ENCODE measurements at regions of chr4 and their contacts with region 1.

Region 1: DNA sequence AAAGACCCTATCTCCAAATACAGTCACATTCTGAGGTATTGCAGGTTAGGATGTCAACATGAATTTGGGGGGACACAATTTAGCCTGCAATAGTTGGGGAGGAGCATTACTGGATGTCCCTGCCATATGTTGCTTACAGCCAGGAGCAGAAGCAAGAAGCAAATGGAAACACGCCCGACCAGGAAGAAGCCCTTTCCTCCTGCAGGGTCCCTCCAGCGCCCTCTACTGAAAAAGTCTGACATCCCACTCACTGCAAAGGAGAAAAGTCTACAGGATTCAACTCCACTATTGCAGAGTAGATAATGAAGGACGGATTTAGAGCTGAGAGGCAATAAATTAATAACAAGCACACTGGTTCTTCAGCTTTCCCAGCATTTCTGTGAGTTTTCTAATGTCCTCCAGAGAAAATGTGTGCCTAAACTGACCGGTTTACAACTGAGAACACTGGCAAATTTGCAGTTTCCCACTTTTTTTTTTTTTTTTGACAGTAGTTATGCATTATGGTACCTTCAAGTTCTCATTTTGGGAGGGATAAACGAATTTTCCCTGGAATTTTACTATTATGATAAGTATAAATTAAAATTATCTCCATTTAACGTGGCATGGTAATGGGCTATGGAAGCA is 31.7 kb downstream of the COQ2 start:
- DNase-seq: peak; percentile 70
- H3K4me3 ChIP-seq: no peak overlapping the region
- H3K27ac ChIP-seq: no peak overlapping the region
- H3K27me3 ChIP-seq: no peaks in the 10 kb centered on the region
- CTCF ChIP-seq: peak; percentile 84

Region 2: GRCh38 chr4:82948647-82949204 is 304.2 kb before region 1 on chr4:
- in situ Hi-C with region 1: no loop called
- DNase-seq: peak; percentile 43
- H3K4me3 ChIP-seq: no peak overlapping the region
- H3K27ac ChIP-seq: no peak overlapping the region
- H3K27me3 ChIP-seq: no peaks in the 10 kb centered on the region
- CTCF ChIP-seq: no peak

Region 3: DNA sequence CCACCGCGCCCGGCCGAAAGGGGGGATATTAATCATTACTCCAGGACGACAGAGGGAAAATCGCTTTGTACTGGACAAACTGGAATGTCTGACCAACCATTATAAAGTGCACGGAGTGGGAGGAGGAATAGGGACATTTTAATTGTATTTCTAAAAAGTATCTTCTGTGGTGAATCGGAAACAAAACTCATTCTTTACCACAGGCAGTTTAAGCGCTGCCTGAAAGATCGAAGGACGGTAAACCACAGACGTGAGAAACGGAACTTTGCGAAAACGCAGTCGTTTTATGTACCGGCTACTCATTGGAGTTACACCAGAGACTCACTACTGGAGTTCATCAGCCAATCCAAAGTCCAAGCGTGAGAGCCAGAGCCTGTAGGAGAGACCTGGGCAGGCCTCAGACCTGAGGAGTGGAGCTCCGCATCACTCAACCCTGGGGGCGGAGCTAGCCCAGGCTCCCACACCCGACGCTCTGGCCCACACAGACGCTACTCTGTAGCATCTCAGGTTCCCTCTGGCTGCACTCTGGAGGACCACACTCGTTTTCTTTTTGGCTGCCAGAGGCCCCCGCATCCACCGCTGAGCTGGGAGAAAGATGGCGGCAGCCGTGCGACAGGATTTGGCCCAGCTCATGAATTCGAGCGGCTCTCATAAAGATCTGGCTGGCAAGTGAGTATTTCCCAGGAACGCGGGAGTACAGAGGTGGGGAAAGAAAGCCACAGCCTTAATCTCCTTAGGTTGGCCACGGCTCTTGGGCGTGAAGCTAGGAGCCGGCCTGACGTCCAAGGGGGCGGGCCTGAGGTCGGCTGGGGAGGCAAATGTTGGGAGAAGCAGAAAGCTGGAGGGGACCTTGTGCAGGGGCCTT is 218.0 kb before region 1 on chr4 and contains the start of gene COPS4:
- in situ Hi-C with region 1: loop called (anchors 25 kb)
- DNase-seq: peak; percentile 100
- H3K4me3 ChIP-seq: peak within 1 kb of the TSS; percentile 94
- H3K27ac ChIP-seq: peak within 1 kb of the TSS; percentile 91
- H3K27me3 ChIP-seq: no peaks in the 10 kb centered on the region
- CTCF ChIP-seq: peak; percentile 68